CD8-positive, alpha-beta T cell (primary cell): ENCODE measurements at regions of chr14 and their contacts with region 1.

Region 1: DNA sequence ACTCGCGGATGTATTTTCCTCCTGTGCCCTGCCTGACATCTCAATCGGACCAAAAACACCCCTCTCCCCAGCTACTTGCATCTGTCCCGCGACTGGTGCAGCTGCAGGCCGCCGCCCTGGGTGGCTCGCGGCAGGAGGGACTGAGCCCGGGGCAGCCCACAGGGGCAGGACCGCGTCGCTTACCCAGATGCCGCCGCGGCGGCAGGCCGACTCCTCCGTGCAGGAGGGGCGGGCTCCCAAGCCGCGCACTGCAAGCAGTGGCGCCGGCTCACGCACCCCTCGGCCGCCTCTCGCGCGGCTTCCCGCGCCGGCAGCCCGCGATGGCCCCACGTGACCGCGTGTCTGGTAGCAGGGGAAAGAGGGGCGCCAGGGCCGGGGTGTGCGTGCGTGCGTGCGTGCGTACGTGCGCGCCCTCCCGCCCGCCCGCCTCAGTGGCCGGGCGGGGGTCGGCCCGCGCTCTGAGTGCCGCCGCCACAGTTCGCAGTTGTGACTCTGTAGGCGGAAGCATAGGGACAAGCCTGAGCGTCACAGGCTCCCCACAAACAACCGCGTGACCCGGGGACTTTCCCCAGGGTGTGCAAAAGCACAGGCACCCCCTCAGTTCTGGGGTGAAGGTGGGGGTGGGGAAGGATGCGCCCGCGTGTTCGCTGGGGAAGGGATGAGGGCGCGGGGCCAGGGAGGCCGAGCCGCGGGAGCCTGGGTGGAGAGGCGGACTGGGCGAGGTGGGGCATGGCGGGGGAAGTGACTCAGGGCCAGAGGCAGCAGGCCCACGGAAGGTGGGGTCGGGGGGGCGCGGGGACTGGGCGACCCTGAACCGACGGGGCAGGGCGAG is at the start of gene ZBTB25:
- DNase-seq: peak; percentile 91 to 100 (median 96)
- ATAC-seq: peak; percentile 68
- H3K4me3 ChIP-seq: peak within 1 kb of the TSS; percentile 78 to 95
- H3K4me3 Mint-ChIP-seq: peak within 1 kb of the TSS; percentile 91
- H3K27ac ChIP-seq: peak within 1 kb of the TSS; percentile 99 to 100
- H3K27ac Mint-ChIP-seq: peak within 1 kb of the TSS; percentile 100
- H3K4me1 ChIP-seq: peaks cover 59% of the 10 kb centered on the region
- H3K4me1 Mint-ChIP-seq: peaks cover 66% of the 10 kb centered on the region
- H3K27me3 ChIP-seq: no peaks in the 10 kb centered on the region
- H3K27me3 Mint-ChIP-seq: no peaks in the 10 kb centered on the region
- CTCF ChIP-seq: no peak
- total RNA-seq, gene ZBTB25: 42.3 to 43.8 TPM

Region 2: GRCh38 chr14:63641473-63642228 is 862.0 kb before region 1 on chr14 and contains the start of gene WDR89:
- CTCF ChIA-PET with region 1: no interaction called
- POLR2A ChIA-PET with region 1: interaction called, 7 read pairs
- intact Hi-C with region 1: loop called (anchors 1 to 5 kb)
- DNase-seq: peak; percentile 91 to 100 (median 94)
- ATAC-seq: peak; percentile 85
- H3K4me3 ChIP-seq: peak within 1 kb of the TSS; percentile 85 to 89
- H3K4me3 Mint-ChIP-seq: peak within 1 kb of the TSS; percentile 87
- H3K27ac ChIP-seq: peak within 1 kb of the TSS; percentile 94 to 99
- H3K27ac Mint-ChIP-seq: peak within 1 kb of the TSS; percentile 96
- H3K4me1 ChIP-seq: peaks cover 30% of the 10 kb centered on the region
- H3K4me1 Mint-ChIP-seq: peaks cover 57% of the 10 kb centered on the region
- H3K27me3 ChIP-seq: no peaks in the 10 kb centered on the region
- H3K27me3 Mint-ChIP-seq: no peaks in the 10 kb centered on the region
- CTCF ChIP-seq: peak; percentile 72
- total RNA-seq, gene WDR89: 13.6 to 13.7 TPM

Region 3: DNA sequence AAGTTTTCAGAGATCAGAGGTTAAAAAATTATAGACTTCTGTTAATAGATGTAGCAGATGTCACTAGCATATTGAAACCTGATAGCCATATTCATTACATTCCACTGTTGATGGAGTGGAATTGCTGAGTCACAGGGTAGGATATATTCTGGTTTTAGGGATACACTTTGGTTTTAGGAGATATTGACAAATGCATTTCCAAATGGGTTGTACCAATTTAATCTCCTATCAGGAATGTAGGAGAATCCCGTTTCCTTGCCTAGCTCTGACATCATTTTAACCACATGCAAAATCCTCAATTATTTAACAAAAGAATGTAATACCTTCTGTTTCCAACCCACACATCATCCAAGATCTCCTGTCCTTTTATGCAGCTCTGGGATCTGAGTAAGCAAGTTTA is 178.8 kb before region 1 on chr14:
- CTCF ChIA-PET with region 1: no interaction called
- POLR2A ChIA-PET with region 1: no interaction called
- intact Hi-C with region 1: no loop called
- DNase-seq: no peak
- ATAC-seq: no peak
- H3K4me3 ChIP-seq: no peak overlapping the region
- H3K4me3 Mint-ChIP-seq: no peak overlapping the region
- H3K27ac ChIP-seq: no peak overlapping the region
- H3K27ac Mint-ChIP-seq: no peak overlapping the region
- H3K4me1 ChIP-seq: no peaks in the 10 kb centered on the region
- H3K4me1 Mint-ChIP-seq: no peaks in the 10 kb centered on the region
- H3K27me3 ChIP-seq: peaks cover 0 to 3% of the 10 kb centered on the region in 2 experiments
- H3K27me3 Mint-ChIP-seq: peaks cover 2% of the 10 kb centered on the region
- CTCF ChIP-seq: no peak

Region 4: GRCh38 chr14:64338616-64339316 is 164.9 kb before region 1 on chr14:
- CTCF ChIA-PET with region 1: no interaction called
- POLR2A ChIA-PET with region 1: interaction called, 18 read pairs
- intact Hi-C with region 1: loop called in 1 of 2 experiments (anchors 1 kb)
- DNase-seq: peak; percentile 54 to 93 (median 85)
- ATAC-seq: peak; percentile 79
- H3K4me3 ChIP-seq: peak overlapping the region; percentile 67 to 87
- H3K4me3 Mint-ChIP-seq: peak overlapping the region; percentile 97
- H3K27ac ChIP-seq: peak overlapping the region; percentile 38 to 58
- H3K27ac Mint-ChIP-seq: peak overlapping the region; percentile 96
- H3K4me1 ChIP-seq: peaks cover 19% of the 10 kb centered on the region
- H3K4me1 Mint-ChIP-seq: peaks cover 26% of the 10 kb centered on the region
- H3K27me3 ChIP-seq: no peaks in the 10 kb centered on the region
- H3K27me3 Mint-ChIP-seq: no peaks in the 10 kb centered on the region
- CTCF ChIP-seq: no peak

Region 5: DNA sequence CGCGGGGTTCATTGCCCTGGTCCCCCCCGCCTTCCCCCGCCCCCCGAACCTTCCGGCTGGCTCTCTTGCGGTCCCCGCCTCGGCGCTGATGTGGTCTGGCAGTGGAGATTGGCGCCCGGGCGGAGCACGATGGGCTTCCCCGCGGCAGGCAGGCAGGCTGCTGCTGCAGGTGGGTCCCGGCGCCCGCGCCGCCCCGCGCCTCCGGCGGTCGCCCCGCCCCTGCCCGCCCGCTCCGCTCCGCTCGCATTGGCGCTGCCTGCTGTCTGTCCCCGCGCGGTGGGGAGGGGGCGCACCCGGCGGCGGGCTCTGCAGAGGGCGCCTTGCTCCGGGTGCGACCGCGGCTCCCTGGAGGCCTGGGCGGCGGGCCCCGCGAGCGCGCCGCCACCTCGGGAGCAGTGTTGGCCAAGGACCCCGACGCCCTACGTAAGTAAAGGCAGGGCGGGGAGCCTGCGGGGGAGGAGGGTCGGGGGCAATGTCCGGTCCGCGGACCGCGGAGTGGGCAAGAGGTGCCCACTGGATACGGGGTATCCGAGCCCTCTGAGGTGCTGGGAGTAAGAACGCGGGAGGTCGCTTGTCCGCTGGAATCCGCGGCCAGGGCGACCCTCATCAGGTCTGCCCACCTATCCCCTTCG is 38.4 kb before region 1 on chr14 and contains the start of gene AKAP5:
- CTCF ChIA-PET with region 1: no interaction called
- POLR2A ChIA-PET with region 1: interaction called, 14 read pairs
- intact Hi-C with region 1: loop called (anchors 5 kb)
- DNase-seq: peak; percentile 17 to 84 (median 62)
- ATAC-seq: peak; percentile 93
- H3K4me3 ChIP-seq: peak within 1 kb of the TSS; percentile 45 to 59
- H3K4me3 Mint-ChIP-seq: peak within 1 kb of the TSS; percentile 89
- H3K27ac ChIP-seq: peak within 1 kb of the TSS; percentile 15 to 35
- H3K27ac Mint-ChIP-seq: peak within 1 kb of the TSS; percentile 68
- H3K4me1 ChIP-seq: peaks cover 24% of the 10 kb centered on the region
- H3K4me1 Mint-ChIP-seq: peaks cover 47% of the 10 kb centered on the region
- H3K27me3 ChIP-seq: no peaks in the 10 kb centered on the region
- H3K27me3 Mint-ChIP-seq: no peaks in the 10 kb centered on the region
- CTCF ChIP-seq: no peak
- total RNA-seq, gene AKAP5: 3.7 TPM

Region 6: GRCh38 chr14:64540208-64541157 is 36.8 kb after region 1 on chr14 and contains the start of gene HSPA2:
- CTCF ChIA-PET with region 1: interaction called, 4 read pairs
- POLR2A ChIA-PET with region 1: interaction called, 7 read pairs
- intact Hi-C with region 1: loop called (anchors 1 kb)
- DNase-seq: peak; percentile 85 to 98 (median 93)
- ATAC-seq: peak; percentile 87
- H3K4me3 ChIP-seq: peak within 1 kb of the TSS; percentile 83 to 90
- H3K4me3 Mint-ChIP-seq: peak within 1 kb of the TSS; percentile 96
- H3K27ac ChIP-seq: peak within 1 kb of the TSS; percentile 42 to 56
- H3K27ac Mint-ChIP-seq: peak within 1 kb of the TSS; percentile 84
- H3K4me1 ChIP-seq: peaks cover 19% of the 10 kb centered on the region
- H3K4me1 Mint-ChIP-seq: peaks cover 26% of the 10 kb centered on the region
- H3K27me3 ChIP-seq: no peaks in the 10 kb centered on the region
- H3K27me3 Mint-ChIP-seq: no peaks in the 10 kb centered on the region
- CTCF ChIP-seq: peak; percentile 63
- total RNA-seq, gene HSPA2: 2.1 to 2.6 TPM

Region 7: GRCh38 chr14:65370801-65371248 is 867.1 kb after region 1 on chr14:
- CTCF ChIA-PET with region 1: no interaction called
- POLR2A ChIA-PET with region 1: no interaction called
- intact Hi-C with region 1: no loop called
- DNase-seq: no peak
- ATAC-seq: no peak
- H3K4me3 ChIP-seq: no peak overlapping the region
- H3K4me3 Mint-ChIP-seq: no peak overlapping the region
- H3K27ac ChIP-seq: no peak overlapping the region
- H3K27ac Mint-ChIP-seq: no peak overlapping the region
- H3K4me1 ChIP-seq: no peaks in the 10 kb centered on the region
- H3K4me1 Mint-ChIP-seq: peaks cover 9% of the 10 kb centered on the region
- H3K27me3 ChIP-seq: no peaks in the 10 kb centered on the region
- H3K27me3 Mint-ChIP-seq: no peaks in the 10 kb centered on the region
- CTCF ChIP-seq: no peak